IMR-90 (cell line): ENCODE measurements at regions of chr12 and their contacts with region 1.

Region 1: DNA sequence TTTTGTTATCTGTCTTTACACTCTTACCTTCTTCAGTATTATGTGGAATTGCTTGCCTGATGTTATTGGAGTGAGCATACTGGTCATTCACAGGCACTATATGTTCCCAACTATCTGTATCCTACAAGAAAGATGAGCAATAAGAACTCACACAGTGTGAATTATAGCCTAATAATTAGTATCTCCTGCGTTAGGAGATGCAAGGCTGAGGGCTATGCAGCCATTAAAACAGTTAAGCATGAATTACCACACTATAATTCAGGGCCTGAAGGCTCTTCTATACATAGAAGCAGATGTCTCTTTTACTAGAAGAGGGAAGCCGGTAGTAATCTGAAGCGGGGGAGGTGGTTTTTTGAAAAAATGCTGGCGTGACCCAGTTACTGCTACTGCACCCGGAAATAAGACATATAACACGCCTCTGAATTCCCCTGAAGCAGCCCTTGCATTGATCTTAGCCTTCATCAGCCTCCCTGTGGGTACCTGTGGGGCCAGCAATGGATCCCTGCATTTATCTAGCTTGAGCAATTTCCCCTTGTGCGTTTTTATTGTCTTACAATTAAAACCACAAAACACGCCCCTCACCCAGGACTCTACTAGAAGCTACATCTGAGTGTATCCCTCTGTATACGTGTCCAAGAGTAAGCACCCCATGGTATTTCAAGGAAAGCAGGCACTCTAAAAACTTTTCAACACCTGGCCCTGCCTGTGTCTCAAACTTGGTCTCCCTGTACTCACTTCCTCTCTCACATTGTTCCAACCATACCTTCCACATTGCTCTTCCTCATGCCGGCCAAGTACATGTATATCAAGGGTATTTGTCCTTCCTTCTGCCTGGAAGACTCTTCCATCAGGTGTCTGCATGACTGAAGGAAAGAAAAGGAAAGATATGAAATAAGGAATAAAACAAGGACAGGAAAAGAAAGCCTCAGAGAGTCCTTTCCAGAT is 210.9 kb upstream of the ARID2 start:
- DNase-seq: no peak
- ATAC-seq: no peak
- H3K4me3 ChIP-seq: no peak overlapping the region
- H3K27ac ChIP-seq: no peak overlapping the region
- H3K4me1 ChIP-seq: no peaks in the 10 kb centered on the region
- H3K27me3 ChIP-seq: no peaks in the 10 kb centered on the region
- CTCF ChIP-seq: no peak
- POLR2A ChIP-seq: no peak
- RAD21 ChIP-seq: no peak

Region 2: DNA sequence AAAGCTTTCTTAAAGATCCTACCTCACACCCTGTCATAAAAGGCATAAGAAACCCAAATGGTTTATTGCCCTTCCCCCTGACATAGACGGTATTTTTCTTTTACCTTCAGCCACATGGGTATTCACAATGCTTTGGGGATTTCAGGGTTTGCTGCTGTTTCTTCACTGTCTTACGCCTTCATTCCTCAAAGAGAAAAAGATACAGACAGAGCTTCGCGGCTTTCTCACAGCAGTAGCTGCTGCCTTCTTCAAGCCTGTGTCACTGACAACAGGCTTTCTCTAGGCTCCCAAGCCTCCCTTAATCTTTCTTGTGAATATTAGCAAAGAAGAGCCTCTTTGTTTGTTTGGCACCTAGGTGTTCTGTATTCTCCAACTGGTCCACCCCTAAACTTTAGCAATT is 13.6 kb after region 1 on chr12:
- CTCF ChIA-PET with region 1: no interaction called
- POLR2A ChIA-PET with region 1: no interaction called
- dilution Hi-C with region 1: no loop called
- in situ Hi-C with region 1: no loop called
- intact Hi-C with region 1: loop called (anchors 1 kb)
- DNase-seq: no peak
- ATAC-seq: no peak
- H3K4me3 ChIP-seq: no peak overlapping the region
- H3K27ac ChIP-seq: no peak overlapping the region
- H3K4me1 ChIP-seq: no peaks in the 10 kb centered on the region
- H3K27me3 ChIP-seq: peaks cover 4% of the 10 kb centered on the region; the same call in 1 of the 2 replicates
- CTCF ChIP-seq: no peak
- POLR2A ChIP-seq: no peak
- RAD21 ChIP-seq: no peak

Region 3: GRCh38 chr12:45878630-45879255 is 360.2 kb after region 1 on chr12:
- CTCF ChIA-PET with region 1: no interaction called
- POLR2A ChIA-PET with region 1: no interaction called
- dilution Hi-C with region 1: no loop called
- in situ Hi-C with region 1: no loop called
- intact Hi-C with region 1: no loop called
- DNase-seq: peak; percentile 24
- ATAC-seq: peak; percentile 27; the same call in 1 of the 2 replicates
- H3K4me3 ChIP-seq: no peak overlapping the region
- H3K27ac ChIP-seq: no peak overlapping the region
- H3K4me1 ChIP-seq: peaks cover 4% of the 10 kb centered on the region; the same call in 1 of the 2 replicates
- H3K27me3 ChIP-seq: no peaks in the 10 kb centered on the region
- CTCF ChIP-seq: no peak
- POLR2A ChIP-seq: no peak
- RAD21 ChIP-seq: no peak